Dendritic cell treated with granulocyte-macrophage colony-stimulating factor and Interleukin-4, amounts not matched to agents 40 ng/mL and 50 ng/mL, for 4 days (primary cell): ENCODE measurements at regions of chr10 and their contacts with region 1.

Region 1: DNA sequence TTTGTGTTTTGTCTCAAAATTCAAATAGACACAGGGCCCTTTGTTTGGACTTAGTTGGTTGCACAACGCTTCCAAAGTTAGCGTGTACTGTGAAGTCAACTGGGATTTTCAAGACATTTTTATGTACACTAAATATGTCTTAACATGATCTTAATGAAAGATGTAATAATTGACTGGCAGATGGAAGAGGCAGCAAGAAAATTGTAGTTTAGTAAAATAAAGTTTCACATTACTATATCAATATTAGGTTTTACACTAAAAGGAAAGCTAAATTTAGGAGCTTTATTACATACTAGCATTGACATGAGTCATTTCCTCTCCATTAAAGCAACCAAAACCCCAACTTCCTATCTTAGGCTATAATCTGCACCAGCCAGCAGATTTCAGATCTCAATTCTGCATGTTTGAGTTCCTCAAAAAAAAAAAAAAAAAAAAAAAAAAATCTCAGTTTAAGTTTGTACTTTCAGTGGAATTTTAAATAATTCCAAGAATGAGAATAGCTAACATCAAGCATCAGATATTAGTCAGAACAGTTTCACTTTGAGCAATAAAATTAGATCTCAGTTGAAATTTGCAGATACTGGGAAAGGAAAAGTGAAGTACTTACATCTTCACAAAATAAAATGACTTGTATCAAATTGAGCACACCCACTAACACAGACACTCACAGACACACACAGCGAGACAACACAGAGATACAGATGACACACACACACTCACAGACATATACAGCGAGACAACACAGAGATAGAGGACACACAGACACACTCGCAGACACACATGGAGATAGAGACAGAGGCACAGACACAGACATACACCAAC is 346.6 kb upstream of the KLF6 start:
- H3K4me3 Mint-ChIP-seq: no peak overlapping the region
- H3K27ac Mint-ChIP-seq: no peak overlapping the region
- H3K4me1 Mint-ChIP-seq: peaks cover 18% of the 10 kb centered on the region
- H3K27me3 Mint-ChIP-seq: no peaks in the 10 kb centered on the region

Region 2: GRCh38 chr10:4006051-4006450 is 125.6 kb before region 1 on chr10:
- intact Hi-C with region 1: loop called (anchors 5 kb)
- H3K4me3 Mint-ChIP-seq: peak overlapping the region; percentile 9
- H3K27ac Mint-ChIP-seq: peak overlapping the region; percentile 74
- H3K4me1 Mint-ChIP-seq: peaks cover 52% of the 10 kb centered on the region
- H3K27me3 Mint-ChIP-seq: peaks cover 2% of the 10 kb centered on the region

Region 3: GRCh38 chr10:4176500-4177281 is 45.1 kb after region 1 on chr10:
- intact Hi-C with region 1: loop called (anchors 1 kb)
- H3K4me3 Mint-ChIP-seq: no peak overlapping the region
- H3K27ac Mint-ChIP-seq: peak overlapping the region; percentile 95
- H3K4me1 Mint-ChIP-seq: peaks cover 28% of the 10 kb centered on the region
- H3K27me3 Mint-ChIP-seq: no peaks in the 10 kb centered on the region

Region 4: DNA sequence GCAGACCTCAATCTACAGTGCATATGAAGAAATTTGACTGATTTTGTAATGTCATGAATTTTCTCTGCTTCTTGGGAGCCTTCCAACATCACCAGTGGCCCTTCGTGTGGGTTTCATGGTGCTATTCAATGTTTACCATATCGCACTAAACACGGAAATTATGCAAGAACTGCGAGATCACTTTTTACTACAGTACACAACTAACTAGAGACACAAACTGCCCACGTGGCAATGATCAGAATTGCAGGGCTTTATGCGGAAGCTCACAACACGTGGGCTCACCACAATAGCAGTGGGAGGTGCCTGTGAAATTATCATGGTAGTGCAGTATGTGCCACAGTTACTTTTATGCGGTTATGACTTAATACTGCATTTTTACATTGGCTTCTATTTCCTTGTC is 103.0 kb after region 1 on chr10:
- intact Hi-C with region 1: no loop called
- H3K4me3 Mint-ChIP-seq: no peak overlapping the region
- H3K27ac Mint-ChIP-seq: no peak overlapping the region
- H3K4me1 Mint-ChIP-seq: no peaks in the 10 kb centered on the region
- H3K27me3 Mint-ChIP-seq: no peaks in the 10 kb centered on the region

Region 5: GRCh38 chr10:4333459-4333894 is 201.9 kb after region 1 on chr10:
- intact Hi-C with region 1: loop called (anchors 5 kb)
- H3K4me3 Mint-ChIP-seq: no peak overlapping the region
- H3K27ac Mint-ChIP-seq: no peak overlapping the region
- H3K4me1 Mint-ChIP-seq: peaks cover 6% of the 10 kb centered on the region
- H3K27me3 Mint-ChIP-seq: no peaks in the 10 kb centered on the region